Panc1 (cell line): ENCODE measurements at regions of chr2 and their contacts with region 1.

Region 1: GRCh38 chr2:130873700-130874346 is 37.1 kb downstream of the ARHGEF4 start:
- DNase-seq: peak; percentile 30
- ATAC-seq: peak; percentile 89
- H3K4me3 ChIP-seq: no peak overlapping the region
- H3K27ac ChIP-seq: no peak overlapping the region
- H3K4me1 ChIP-seq: no peaks in the 10 kb centered on the region
- H3K27me3 ChIP-seq: no peaks in the 10 kb centered on the region
- CTCF ChIP-seq: peak; percentile 85

Region 2: GRCh38 chr2:130920415-130921163 is 46.8 kb after region 1 on chr2:
- CTCF ChIA-PET with region 1: no interaction called
- POLR2A ChIA-PET with region 1: no interaction called
- in situ Hi-C with region 1: no loop called
- intact Hi-C with region 1: loop called (anchors 5 kb)
- DNase-seq: peak; percentile 54
- ATAC-seq: peak; percentile 87
- H3K4me3 ChIP-seq: no peak overlapping the region
- H3K27ac ChIP-seq: no peak overlapping the region
- H3K4me1 ChIP-seq: no peaks in the 10 kb centered on the region; the same call in 1 of the 2 replicates
- H3K27me3 ChIP-seq: 0 out of 2 replicates have a peak, but pooled peaks cover 1% of the 10 kb centered on the region
- CTCF ChIP-seq: peak; percentile 94

Region 3: DNA sequence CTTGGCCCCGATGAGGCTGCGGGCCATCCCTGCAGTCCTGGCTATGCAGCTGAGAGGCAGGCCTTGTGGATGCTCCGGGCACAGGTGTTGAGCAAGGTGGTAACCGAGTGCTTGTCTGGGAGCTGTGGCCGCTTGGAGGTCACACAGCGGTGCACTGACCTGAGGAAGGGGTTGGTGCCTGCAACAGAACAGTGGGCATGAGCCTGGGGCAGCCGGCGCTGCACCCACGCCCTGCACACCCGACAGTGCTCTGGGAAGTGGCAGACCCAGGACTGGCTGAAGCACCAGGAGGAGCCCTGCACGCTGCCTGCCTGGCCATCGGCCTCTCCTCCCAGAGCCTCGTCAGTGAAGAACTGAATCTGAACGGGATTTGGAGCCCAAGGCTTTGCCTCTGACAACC is 327.3 kb after region 1 on chr2:
- CTCF ChIA-PET with region 1: no interaction called
- POLR2A ChIA-PET with region 1: no interaction called
- in situ Hi-C with region 1: no loop called
- intact Hi-C with region 1: no loop called
- DNase-seq: no peak
- ATAC-seq: no peak
- H3K4me3 ChIP-seq: no peak overlapping the region
- H3K27ac ChIP-seq: no peak overlapping the region
- H3K4me1 ChIP-seq: no peaks in the 10 kb centered on the region
- H3K27me3 ChIP-seq: peaks cover 3% of the 10 kb centered on the region; the same call in 1 of the 2 replicates
- CTCF ChIP-seq: no peak